Activated CD4-positive, alpha-beta memory T cell treated with anti-CD3 and anti-CD28 coated beads, Interleukin-2, amount 10 ng/mL, durations not matched to agents 7 days and 5 days (primary cell): ENCODE measurements at regions of chr16 and their contacts with region 1.

Region 1: GRCh38 chr16:2867987-2868789 is 10.2 kb upstream of the PRSS22 start:
- DNase-seq: peak; percentile 96
- H3K4me3 Mint-ChIP-seq: peak overlapping the region; percentile 82
- H3K27ac Mint-ChIP-seq: peak overlapping the region; percentile 84
- H3K4me1 Mint-ChIP-seq: peaks cover 24% of the 10 kb centered on the region
- H3K27me3 Mint-ChIP-seq: peaks cover 7% of the 10 kb centered on the region

Region 2: DNA sequence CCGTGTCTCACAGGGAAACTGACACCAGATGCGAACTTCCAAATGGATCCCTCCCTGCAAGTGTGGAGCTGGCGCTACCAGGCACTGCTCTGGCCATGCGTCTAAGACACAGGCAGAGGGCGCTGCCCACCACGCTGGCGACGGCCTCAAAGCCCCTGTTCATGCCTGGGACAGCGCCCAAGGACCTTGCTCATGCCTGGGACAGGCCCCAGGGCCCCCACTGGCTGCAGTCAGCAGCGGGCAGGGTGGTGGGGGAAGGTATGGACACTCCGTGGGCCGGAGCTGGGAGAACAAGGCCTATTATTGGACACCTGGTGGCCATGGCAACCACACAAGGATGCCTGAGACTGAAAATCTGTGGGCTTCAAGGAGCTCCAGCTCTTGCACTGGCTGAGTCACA is 29.3 kb before region 1 on chr16:
- CTCF ChIA-PET with region 1: interaction called, 43 read pairs
- POLR2A ChIA-PET with region 1: interaction called, 17 read pairs
- DNase-seq: peak; percentile 65
- H3K4me3 Mint-ChIP-seq: no peak overlapping the region
- H3K27ac Mint-ChIP-seq: no peak overlapping the region
- H3K4me1 Mint-ChIP-seq: peaks cover 36% of the 10 kb centered on the region
- H3K27me3 Mint-ChIP-seq: peaks cover 2% of the 10 kb centered on the region

Region 3: DNA sequence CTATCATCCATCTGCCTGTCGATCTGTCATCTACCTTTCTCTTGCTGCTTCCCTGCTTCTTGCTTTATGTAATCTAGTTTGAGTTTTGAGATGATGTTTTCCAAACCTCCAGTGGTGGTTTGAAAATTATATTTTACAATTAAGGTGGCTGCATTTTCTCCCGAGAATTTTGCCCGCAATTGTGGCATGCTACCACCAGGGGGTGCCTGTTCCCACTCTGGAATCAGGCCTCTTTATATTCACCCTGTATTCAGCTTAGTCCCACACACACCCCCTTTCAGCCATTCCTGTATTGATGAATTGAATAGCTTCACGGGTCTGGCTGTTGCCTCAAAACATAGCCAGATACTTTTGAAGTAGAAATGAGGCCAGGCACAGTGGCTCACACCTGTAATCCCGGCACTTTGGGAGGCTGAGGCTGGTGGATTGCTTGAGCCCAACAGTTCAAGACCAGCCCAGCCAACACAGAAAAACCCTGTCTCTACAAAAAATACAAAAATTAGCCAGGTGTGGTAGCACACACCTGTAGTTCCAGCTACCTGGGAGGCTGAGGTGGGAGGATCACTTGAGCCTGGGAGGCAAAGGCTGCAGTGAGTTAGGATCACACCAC is 13.4 kb before region 1 on chr16:
- CTCF ChIA-PET with region 1: interaction called, 15 read pairs
- POLR2A ChIA-PET with region 1: interaction called, 3 read pairs
- DNase-seq: no peak
- H3K4me3 Mint-ChIP-seq: no peak overlapping the region
- H3K27ac Mint-ChIP-seq: no peak overlapping the region
- H3K4me1 Mint-ChIP-seq: peaks cover 5% of the 10 kb centered on the region
- H3K27me3 Mint-ChIP-seq: peaks cover 10% of the 10 kb centered on the region

Region 4: DNA sequence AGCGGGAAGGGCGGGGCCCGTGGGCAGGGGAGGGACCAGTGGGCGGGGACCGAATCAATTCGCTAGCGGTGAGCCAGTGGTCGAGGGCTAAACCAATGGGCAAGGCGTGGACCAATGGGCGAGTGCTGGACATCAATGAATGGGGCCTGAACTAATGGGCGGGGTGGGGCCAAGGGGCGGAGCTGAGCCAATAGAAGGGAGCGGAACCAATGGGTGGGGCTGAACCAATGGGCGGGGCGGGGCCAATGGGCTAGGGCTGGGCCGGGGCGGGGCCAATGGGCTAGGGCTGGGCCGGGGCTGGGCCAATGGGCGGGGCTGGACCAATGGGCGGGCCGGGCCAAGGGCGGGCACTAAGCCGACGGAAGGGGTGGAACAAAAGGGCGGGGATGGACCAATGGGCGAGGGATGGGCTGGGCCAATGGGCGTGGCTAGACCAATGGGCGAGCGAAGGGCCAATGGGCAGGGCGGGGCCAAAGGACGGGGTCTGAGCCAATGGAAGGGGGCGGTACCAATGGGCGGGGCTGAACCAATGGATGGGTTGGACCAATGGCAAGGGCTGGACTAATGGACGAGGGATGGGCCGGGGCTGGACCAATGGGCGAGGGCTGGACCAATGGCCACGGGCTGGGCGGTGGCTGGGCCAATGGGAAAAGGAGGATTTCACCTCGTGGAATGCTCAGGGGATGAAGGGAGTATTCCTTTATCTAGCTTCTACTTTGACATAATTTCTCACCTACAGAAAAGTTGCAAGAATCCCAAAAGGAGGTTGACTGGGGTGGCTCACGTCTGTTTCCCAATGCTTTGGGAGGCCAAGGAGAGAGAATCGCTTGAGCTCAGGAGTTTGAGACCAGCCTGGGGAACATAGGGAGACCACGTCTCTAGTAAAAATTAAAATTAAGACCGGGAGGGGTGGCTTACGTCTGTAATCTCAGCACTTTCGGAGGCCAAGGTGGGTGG is 37.5 kb after region 1 on chr16:
- CTCF ChIA-PET with region 1: interaction called, 11 read pairs
- POLR2A ChIA-PET with region 1: interaction called, 6 read pairs
- DNase-seq: peak; percentile 98
- H3K4me3 Mint-ChIP-seq: peak overlapping the region; percentile 87
- H3K27ac Mint-ChIP-seq: peak overlapping the region; percentile 91
- H3K4me1 Mint-ChIP-seq: peaks cover 28% of the 10 kb centered on the region
- H3K27me3 Mint-ChIP-seq: peaks cover 6% of the 10 kb centered on the region

Region 5: DNA sequence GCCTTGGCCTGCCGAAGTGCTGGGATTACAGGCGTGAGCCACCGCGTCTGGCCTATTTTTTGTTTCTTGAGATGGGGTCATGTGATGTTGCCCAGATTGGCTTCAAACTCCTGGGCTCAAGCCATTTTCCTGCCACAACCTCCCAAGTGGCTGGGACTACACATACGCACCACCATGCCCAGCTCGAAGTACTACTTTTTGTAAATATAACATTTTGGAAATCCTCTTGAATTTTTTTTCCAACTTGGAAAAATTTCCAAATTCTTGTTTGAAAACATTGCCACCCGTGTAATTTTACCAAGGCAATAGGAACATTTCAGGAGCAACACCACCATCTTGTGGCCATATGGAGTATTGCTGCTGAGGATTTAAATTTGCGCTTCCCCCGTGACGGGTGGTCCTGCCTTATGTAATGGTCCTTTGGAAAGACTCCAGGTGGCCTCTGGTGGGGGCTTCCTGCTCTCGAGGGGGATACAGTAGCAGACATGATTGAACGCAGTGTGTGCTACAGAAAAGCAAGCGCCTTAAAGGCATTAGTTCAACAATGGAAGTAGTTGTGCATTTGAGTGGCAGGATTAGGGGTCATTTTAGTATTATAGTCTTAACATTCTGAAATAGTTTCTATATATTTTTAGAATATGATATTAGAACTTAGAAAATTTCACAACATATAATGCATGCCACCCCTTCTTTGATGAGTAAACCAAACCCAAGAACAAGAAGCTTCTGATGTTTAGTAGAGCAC is 51.5 kb after region 1 on chr16:
- CTCF ChIA-PET with region 1: interaction called, 13 read pairs
- POLR2A ChIA-PET with region 1: interaction called, 4 read pairs
- DNase-seq: peak; percentile 63
- H3K4me3 Mint-ChIP-seq: no peak overlapping the region
- H3K27ac Mint-ChIP-seq: peak overlapping the region; percentile 9
- H3K4me1 Mint-ChIP-seq: peaks cover 22% of the 10 kb centered on the region
- H3K27me3 Mint-ChIP-seq: no peaks in the 10 kb centered on the region